ENCODE measurements at regions of chr17 and their contacts with region 1.

Region 1: DNA sequence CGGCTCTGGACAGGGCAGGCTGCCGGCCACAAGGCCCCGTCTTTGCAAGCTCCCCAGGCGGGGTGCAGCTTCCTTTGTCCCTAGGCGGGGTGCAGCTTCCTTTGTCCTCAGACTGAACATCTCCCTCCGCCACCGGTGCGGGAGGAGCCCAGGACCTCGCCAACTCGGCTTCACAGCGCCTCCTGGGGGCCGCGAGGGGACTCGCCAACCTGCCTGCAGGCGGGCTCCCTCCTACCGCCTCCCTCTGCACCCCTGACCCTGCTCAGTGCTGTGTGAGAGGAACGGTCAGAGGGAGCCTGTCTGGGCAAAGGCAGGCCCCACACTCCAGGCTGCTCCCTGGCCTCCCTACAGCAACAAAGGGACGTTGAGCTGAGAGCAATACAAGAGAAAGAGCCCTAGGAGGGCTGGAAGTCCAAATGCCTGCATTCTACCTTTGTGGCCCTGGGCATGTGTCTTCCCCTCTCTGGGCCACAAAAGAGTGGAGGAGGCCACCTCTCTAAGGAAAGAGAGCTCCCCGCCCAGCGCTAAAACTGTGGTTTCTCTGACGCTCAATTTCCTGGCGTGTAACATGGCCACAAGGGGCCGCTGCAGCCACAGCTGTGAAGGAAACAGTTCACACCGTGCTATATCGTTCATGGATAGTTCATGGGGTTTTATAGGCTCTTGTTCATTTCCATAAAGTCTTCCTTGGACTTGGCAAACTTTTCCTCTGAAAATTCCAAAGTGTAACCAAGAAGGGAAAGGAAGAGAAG is 20.9 kb upstream of the KRT19 start:
- DNase-seq: peak; percentile 74 to 81
- H3K4me3 ChIP-seq: peak overlapping the region in 1 of 3 donors; percentile 12
- H3K27ac ChIP-seq: peak overlapping the region in 1 of 3 donors; percentile 25
- H3K4me1 ChIP-seq: peaks cover 7 to 14% of the 10 kb centered on the region in 2 donors
- H3K27me3 ChIP-seq: no peaks in the 10 kb centered on the region
- CTCF ChIP-seq: peak; percentile 72 to 86 (median 80)
- POLR2A ChIP-seq: no peak

Region 2: GRCh38 chr17:40909351-40909750 is 639.7 kb before region 1 on chr17:
- intact Hi-C with region 1: loop called (anchors 5 kb)
- DNase-seq: peak; percentile 80 to 90
- H3K4me3 ChIP-seq: no peak overlapping the region
- H3K27ac ChIP-seq: no peak overlapping the region
- H3K4me1 ChIP-seq: peaks cover 0 to 6% of the 10 kb centered on the region in 2 donors
- H3K27me3 ChIP-seq: no peaks in the 10 kb centered on the region
- CTCF ChIP-seq: peak; percentile 16 to 88 (median 76)
- POLR2A ChIP-seq: no peak

Region 3: DNA sequence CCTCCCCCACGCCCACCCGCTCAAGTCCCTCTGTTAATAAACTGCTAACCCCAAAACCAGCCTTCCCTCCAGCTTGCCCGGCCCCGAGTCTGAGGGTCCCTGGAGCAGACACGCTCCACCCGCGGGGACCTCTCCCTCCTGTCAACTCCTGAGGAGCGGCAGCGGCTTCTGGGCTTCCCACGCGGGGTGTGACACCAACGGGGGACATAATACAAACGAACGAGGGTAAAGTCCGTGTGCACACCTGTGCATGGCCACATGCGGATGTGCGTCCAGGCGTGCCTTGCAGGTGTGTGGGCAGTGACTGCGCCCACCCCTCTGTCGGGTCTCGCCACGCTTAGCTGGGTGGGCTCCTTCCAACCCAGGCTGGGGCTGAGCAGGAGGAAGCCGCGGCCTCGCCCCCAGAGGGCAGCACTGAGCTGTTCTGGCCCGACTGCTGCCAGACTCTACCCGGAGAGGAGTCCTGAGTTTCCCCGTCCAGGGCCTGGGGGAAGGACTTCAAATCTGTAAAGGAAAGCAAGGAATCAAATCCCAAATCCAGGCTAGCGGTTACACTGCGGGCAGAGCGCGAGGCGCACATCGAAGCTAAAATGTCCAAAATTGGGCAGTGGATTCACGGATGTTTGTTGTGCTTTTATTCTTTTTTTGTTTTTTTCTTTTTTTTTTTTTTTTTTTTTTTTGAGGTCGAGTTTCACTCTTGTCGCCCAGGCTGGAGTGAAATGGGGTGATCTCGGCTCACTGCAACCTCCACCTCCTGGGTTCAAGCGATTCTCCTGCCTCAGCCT is 99.6 kb after region 1 on chr17:
- intact Hi-C with region 1: loop called (anchors 5 kb)
- DNase-seq: peak; percentile 87 to 91
- H3K4me3 ChIP-seq: peak overlapping the region in 1 of 3 donors; percentile 12
- H3K27ac ChIP-seq: peak overlapping the region; percentile 24 to 64 (median 42)
- H3K4me1 ChIP-seq: peaks cover 26 to 38% of the 10 kb centered on the region in 2 donors
- H3K27me3 ChIP-seq: no peaks in the 10 kb centered on the region
- CTCF ChIP-seq: peak; percentile 81 to 97 (median 94)
- POLR2A ChIP-seq: peak in 1 of 2 donors; percentile 8

Region 4: GRCh38 chr17:41665566-41666236 is 116.7 kb after region 1 on chr17:
- intact Hi-C with region 1: loop called (anchors 5 kb)
- DNase-seq: peak; percentile 91 to 92
- H3K4me3 ChIP-seq: peak overlapping the region in 2 of 3 donors; percentile 28 to 35
- H3K27ac ChIP-seq: peak overlapping the region; percentile 60 to 88 (median 77)
- H3K4me1 ChIP-seq: peaks cover 12 to 21% of the 10 kb centered on the region in 2 donors
- H3K27me3 ChIP-seq: no peaks in the 10 kb centered on the region
- CTCF ChIP-seq: peak; percentile 73 to 98 (median 92)
- POLR2A ChIP-seq: peak in 1 of 2 donors; percentile 76

Measured in thyroid gland (tissue), 4 donors.